ENCODE measurements at regions of chr1 and their contacts with region 1.

Region 1: DNA sequence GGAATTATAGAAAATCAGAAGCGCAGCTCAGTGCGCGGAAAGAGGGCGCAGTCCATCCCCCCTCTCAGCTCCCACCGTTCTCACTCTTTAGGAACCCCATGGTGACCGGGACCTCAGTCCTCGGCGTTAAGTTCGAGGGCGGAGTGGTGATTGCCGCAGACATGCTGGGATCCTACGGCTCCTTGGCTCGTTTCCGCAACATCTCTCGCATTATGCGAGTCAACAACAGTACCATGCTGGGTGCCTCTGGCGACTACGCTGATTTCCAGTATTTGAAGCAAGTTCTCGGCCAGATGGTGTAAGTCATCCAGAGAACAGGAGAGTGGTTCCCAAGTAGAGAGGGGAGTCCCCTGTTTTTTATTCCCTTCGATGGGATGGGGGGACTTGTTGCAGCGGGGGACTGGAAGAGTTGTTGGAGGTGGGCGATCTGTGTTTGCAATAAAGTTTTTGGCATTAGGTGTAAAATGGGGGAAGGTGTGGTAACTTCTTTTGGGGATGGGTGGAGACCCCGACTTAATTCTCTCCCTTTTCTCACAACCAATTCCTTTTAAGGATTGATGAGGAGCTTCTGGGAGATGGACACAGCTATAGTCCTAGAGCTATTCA is 620 bp downstream of the PSMB4 start:
- DNase-seq: no peak
- H3K4me3 ChIP-seq: peak overlapping the region; percentile 69
- H3K27ac ChIP-seq: peak overlapping the region; percentile 61
- H3K4me1 ChIP-seq: peaks cover 3% of the 10 kb centered on the region
- H3K27me3 ChIP-seq: no peaks in the 10 kb centered on the region
- CTCF ChIP-seq: no peak

Region 2: GRCh38 chr1:151294742-151295462 is 105.1 kb before region 1 on chr1:
- intact Hi-C with region 1: loop called (anchors 5 kb)
- DNase-seq: no peak
- H3K4me3 ChIP-seq: no peak overlapping the region
- H3K27ac ChIP-seq: no peak overlapping the region
- H3K4me1 ChIP-seq: no peaks in the 10 kb centered on the region
- H3K27me3 ChIP-seq: no peaks in the 10 kb centered on the region
- CTCF ChIP-seq: no peak

Region 3: DNA sequence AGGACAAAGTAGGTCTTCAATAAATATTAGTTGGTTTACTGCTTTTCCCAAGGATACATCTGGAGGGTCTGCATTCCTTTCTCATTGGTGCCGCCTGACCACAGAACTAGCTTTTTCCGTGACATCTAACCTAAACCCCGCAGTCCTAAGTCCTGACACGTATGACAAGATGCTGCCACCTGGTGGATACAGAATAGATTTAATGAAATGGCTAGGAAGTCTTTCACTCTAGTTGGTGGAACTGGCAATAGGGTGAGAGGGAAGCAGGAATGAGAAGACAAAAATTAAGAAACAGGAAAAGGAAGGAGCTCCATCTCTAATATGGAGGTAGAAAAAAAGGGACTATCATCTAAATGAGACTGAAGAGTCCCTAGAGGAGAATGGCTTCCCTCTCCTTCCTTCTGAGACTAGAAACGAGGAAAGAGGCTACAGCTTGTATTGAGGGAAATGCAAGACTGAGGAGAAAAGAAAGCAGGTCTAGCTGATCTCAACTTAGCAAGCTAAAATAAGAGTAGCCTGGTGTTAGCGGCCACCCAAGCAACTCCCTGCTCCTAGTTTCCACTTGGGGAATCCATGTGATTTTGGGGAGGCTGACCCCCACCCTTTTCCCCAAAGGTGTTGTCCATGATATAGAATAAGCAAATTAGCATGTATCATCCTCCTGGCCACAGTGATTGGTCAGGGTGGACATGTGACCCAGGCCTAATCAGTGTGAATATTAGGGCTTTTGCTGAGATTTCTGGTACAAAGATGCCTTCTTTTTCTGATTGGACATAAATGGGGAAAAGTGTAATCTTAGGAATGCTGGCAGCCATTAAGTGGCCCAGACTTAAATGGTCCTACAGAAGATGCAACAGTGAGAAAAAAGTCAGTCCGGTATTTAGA is 58.9 kb before region 1 on chr1:
- intact Hi-C with region 1: loop called (anchors 5 kb)
- DNase-seq: peak; percentile 69
- H3K4me3 ChIP-seq: no peak overlapping the region
- H3K27ac ChIP-seq: no peak overlapping the region
- H3K4me1 ChIP-seq: peaks cover 3% of the 10 kb centered on the region
- H3K27me3 ChIP-seq: no peaks in the 10 kb centered on the region
- CTCF ChIP-seq: peak; percentile 61

Region 4: GRCh38 chr1:151352006-151352689 is 47.8 kb before region 1 on chr1:
- intact Hi-C with region 1: no loop called
- DNase-seq: no peak
- H3K4me3 ChIP-seq: no peak overlapping the region
- H3K27ac ChIP-seq: no peak overlapping the region
- H3K4me1 ChIP-seq: no peaks in the 10 kb centered on the region
- H3K27me3 ChIP-seq: no peaks in the 10 kb centered on the region
- CTCF ChIP-seq: no peak

Measured in colonic mucosa (tissue), 4 donors.